ENCODE measurements at regions of chrX and their contacts with region 1.

Region 1: DNA sequence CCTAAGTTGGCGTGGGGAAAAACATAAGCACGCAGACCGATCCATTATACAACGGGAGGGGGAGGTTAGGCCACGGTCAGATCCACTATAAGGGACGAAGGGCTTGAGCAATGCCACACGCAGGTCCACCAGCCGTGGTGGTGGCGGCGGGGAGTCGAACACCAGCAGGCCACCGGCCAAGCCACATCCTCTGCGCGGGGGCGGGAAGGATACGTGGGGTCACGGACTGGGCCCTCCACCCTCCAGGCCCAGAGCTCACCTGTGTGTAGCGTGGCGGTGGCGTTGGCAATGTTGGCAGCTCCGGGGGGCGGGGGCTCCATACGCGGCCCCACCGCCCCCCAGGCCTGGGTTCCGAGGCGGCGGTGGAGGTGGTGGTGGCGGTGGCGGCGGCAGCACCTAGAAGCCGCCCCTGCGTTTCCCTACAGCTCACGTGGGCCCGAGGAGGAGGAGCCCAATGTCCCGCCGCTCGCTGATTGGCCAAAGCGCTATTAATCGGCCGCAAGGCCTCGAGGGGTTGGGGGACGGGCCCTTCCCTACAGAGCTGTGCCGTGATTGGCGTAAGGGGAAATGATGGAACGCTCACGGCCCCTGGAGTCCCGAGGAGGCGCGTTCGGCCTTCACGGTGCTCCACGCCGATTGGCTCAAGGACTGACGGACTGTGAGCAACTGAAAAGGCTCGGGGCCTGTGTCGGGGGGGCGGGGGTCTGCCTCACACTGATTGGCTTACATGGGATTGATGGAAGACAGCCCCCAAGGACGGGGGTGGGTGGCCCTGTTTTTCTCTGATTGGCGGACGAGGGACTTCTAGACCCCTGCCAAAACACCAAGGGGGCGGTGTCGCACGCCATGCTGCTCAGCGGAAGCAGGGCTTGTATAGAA is at the start of gene ELK1:
- DNase-seq: peak; percentile 95
- ATAC-seq: peak; percentile 98
- total RNA-seq, gene ELK1: 19.3 TPM

Region 2: GRCh38 chrX:47217642-47218279 is 432.6 kb before region 1 on chrX:
- intact Hi-C with region 1: no loop called
- DNase-seq: peak; percentile 97
- ATAC-seq: peak; percentile 92

Region 3: GRCh38 chrX:47351706-47352105 is 298.7 kb before region 1 on chrX:
- intact Hi-C with region 1: no loop called
- DNase-seq: no peak
- ATAC-seq: no peak

Region 4: DNA sequence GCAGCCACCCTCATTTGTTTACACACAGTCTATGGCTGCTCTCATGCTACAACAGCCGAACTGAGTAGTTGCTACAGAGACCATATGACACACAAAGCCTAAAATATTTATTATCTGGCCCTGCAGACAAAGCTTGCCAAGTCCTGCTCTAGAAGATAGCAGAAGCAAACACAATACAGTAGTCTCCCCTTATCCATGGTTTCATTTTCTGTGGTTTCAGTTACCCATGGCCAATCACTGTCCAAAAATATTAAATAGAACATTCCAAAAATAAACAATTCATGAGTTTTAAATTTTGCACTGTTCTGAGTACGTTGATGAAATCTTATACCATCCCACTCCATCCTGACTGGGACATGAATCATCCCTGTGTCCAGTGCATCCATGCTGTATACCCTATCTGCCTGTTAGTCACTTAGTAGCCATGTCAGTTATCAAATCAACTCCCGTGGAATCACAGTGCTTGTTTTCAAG is 146.1 kb after region 1 on chrX:
- intact Hi-C with region 1: loop called (anchors 10 kb)
- DNase-seq: no peak
- ATAC-seq: peak; percentile 80

Region 5: DNA sequence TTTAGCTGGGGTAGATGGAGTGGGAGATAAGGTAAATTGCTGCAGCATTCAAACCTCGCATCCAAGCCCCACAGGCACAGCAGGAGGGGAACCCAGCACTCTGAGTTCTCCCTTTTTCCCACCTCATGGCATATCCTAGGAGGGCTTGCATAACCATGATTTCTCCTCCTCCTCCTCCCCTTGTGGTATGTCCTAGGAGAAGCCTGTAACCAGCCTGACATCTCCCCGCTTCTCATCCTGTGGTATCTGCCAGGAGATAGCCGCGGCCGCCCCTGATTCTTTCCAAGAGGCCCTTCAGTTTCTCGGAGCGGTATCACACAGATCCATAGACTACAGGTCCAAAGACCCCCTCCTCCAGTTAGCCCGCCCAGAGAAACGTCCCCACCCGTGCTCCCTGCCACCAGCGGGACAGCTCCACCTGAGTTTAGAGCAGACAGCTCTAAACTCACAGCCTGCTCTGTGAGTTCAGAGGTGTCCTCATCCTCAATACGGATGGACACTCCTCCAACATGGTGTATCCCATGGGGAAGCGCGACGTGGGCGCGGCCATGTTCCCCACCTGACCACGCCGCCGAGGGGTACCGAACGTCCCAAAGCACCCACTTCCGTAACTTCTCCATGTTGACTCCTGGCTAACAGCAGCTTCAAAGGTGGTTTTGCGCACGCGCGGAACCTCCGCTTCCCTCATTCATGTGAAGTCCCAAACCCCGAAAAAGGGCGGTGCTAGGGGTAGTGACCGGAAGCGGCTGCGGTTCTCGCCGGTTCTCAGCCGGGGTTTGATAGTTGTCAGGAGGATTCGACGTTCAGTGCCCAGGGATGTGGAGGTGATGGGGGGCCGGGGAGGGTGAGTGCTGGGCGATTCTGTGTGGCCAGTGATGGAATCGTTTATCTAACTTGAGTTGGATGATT is 186.0 kb after region 1 on chrX and contains the start of gene ZNF81:
- intact Hi-C with region 1: loop called (anchors 10 kb)
- DNase-seq: peak; percentile 96
- ATAC-seq: peak; percentile 100
- total RNA-seq, gene ZNF81: 5.0 TPM

Region 6: DNA sequence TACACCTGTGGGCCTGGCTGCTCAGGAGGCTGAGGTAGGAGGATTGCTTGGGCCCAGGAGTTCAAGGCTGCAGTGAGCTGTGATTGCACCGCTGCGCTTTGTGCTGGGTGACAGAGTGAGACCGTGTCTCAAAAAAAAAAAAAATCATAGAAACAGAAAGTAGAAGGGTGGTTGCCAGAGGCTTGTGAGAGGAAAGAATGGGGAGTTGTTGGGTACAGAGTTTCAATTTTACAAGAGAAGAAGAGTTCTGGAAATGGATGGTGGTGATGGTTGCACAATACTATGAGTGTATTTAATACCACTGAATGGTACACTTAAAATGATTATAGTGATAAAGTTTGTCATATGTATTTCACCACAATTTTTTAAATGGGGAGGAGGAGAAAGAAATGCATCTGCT is 1100.9 kb after region 1 on chrX:
- intact Hi-C with region 1: no loop called
- DNase-seq: no peak
- ATAC-seq: no peak

Measured in Right ventricle myocardium inferior (tissue), 1 donor.